GM12878 (cell line): ENCODE measurements at regions of chr12 and their contacts with region 1.

Region 1: DNA sequence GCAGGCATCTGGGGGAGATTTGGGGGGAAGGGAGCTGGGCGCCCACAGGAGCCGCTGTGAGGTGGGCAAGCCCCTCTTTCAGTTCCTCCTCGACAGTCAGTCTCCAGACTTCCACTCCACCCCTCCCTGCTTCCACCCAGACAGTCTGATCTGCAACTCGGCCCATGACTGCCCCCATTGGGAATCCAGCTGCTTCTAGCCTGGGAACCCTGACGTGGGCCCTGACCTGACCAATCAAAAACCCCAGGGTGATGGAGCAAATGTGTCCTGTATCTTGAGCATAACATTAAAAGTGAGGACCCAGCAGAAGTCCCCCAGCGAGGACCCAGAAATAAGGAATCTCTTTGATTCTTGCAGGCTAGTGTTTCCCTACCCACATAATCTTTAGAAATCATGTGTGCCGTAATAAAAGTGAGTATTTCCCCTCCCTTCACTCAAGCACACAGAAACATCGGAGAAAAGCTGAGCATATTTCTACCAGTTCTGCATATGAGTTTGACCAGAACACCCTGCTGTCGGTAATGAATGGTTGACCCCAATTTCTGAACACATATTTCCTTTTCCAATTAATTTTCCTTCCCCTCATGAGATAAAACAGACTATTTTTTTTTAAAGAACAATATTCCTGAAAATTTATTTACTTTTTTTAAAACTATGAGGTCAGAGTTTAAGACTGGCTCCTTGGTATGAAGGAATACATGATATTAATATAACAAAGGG is 6.4 kb downstream of the SSH1 start:
- DNase-seq: peak; percentile 79
- ATAC-seq: peak; percentile 82
- H3K4me3 ChIP-seq: no peak overlapping the region
- H3K27ac ChIP-seq: peak overlapping the region; percentile 74
- H3K4me1 ChIP-seq: peaks cover 36% of the 10 kb centered on the region
- H3K27me3 ChIP-seq: no peaks in the 10 kb centered on the region
- CTCF ChIP-seq: peak in 2 of 3 experiments; percentile 27 to 56; a peak in 4 of 6 replicates
- EP300 ChIP-seq: peak; percentile 66 to 84; a peak in 3 of 4 replicates
- POLR2A ChIP-seq: no peak
- RAD21 ChIP-seq: peak; percentile 67; the same call in 1 of the 2 replicates

Region 2: GRCh38 chr12:108570743-108571608 is 280.0 kb before region 1 on chr12:
- CTCF ChIA-PET with region 1: interaction called, 10 read pairs
- POLR2A ChIA-PET with region 1: interaction called, 4 read pairs
- RAD21 ChIA-PET with region 1: interaction called, 51 read pairs
- SMC1A ChIA-PET with region 1: interaction called, 48 read pairs
- in situ Hi-C with region 1: loop called (anchors 5 kb)
- intact Hi-C with region 1: no loop called
- DNase-seq: no peak
- ATAC-seq: no peak
- H3K4me3 ChIP-seq: no peak overlapping the region
- H3K27ac ChIP-seq: peak overlapping the region; percentile 100
- H3K4me1 ChIP-seq: peaks cover 89% of the 10 kb centered on the region
- H3K27me3 ChIP-seq: no peaks in the 10 kb centered on the region
- CTCF ChIP-seq: peak; percentile 42 to 53 (median 49); a peak in 4 of 6 replicates
- EP300 ChIP-seq: 0 out of 4 replicates have a peak, but pooled peaks of 1 of the 2 experiments have one; percentile 10
- POLR2A ChIP-seq: no peak
- RAD21 ChIP-seq: peak; percentile 66

Region 3: GRCh38 chr12:108731105-108731865 is 119.7 kb before region 1 on chr12 and contains the start of gene CORO1C:
- CTCF ChIA-PET with region 1: no interaction called
- POLR2A ChIA-PET with region 1: interaction called, 3 read pairs
- RAD21 ChIA-PET with region 1: interaction called, 5 read pairs
- SMC1A ChIA-PET with region 1: interaction called, 4 read pairs
- in situ Hi-C with region 1: no loop called
- intact Hi-C with region 1: loop called (anchors 5 kb)
- DNase-seq: peak; percentile 90
- ATAC-seq: peak; percentile 80
- H3K4me3 ChIP-seq: peak within 1 kb of the TSS; percentile 88
- H3K27ac ChIP-seq: peak within 1 kb of the TSS; percentile 79
- H3K4me1 ChIP-seq: peaks cover 13% of the 10 kb centered on the region
- H3K27me3 ChIP-seq: no peaks in the 10 kb centered on the region
- CTCF ChIP-seq: peak; percentile 80 to 88 (median 86)
- EP300 ChIP-seq: no peak; a peak in 1 of 4 replicates
- POLR2A ChIP-seq: peak; percentile 86
- RAD21 ChIP-seq: peak; percentile 58
- polyA plus RNA-seq, gene CORO1C: 52.7 to 52.9 TPM

Region 4: GRCh38 chr12:108826101-108826806 is 24.8 kb before region 1 on chr12:
- CTCF ChIA-PET with region 1: interaction called, 11 read pairs
- POLR2A ChIA-PET with region 1: interaction called, 32 read pairs
- RAD21 ChIA-PET with region 1: interaction called, 65 read pairs
- SMC1A ChIA-PET with region 1: interaction called, 52 read pairs
- in situ Hi-C with region 1: no loop called
- intact Hi-C with region 1: loop called (anchors 2 kb)
- DNase-seq: no peak
- ATAC-seq: peak; percentile 54
- H3K4me3 ChIP-seq: peak overlapping the region; percentile 21; the same call in 1 of the 2 replicates
- H3K27ac ChIP-seq: peak overlapping the region; percentile 60
- H3K4me1 ChIP-seq: peaks cover 81% of the 10 kb centered on the region
- H3K27me3 ChIP-seq: no peaks in the 10 kb centered on the region
- CTCF ChIP-seq: 0 out of 6 replicates have a peak, but pooled peaks of 1 of the 3 experiments have one; percentile 0
- EP300 ChIP-seq: no peak
- POLR2A ChIP-seq: no peak
- RAD21 ChIP-seq: no peak

Region 5: GRCh38 chr12:108838194-108839017 is 12.6 kb before region 1 on chr12:
- CTCF ChIA-PET with region 1: interaction called, 26 read pairs
- POLR2A ChIA-PET with region 1: interaction called, 40 read pairs
- RAD21 ChIA-PET with region 1: interaction called, 34 read pairs
- SMC1A ChIA-PET with region 1: interaction called, 44 read pairs
- in situ Hi-C with region 1: no loop called
- intact Hi-C with region 1: loop called (anchors 2 kb)
- DNase-seq: peak; percentile 91
- ATAC-seq: peak; percentile 98
- H3K4me3 ChIP-seq: no peak overlapping the region
- H3K27ac ChIP-seq: peak overlapping the region; percentile 90
- H3K4me1 ChIP-seq: peaks cover 21% of the 10 kb centered on the region
- H3K27me3 ChIP-seq: no peaks in the 10 kb centered on the region
- CTCF ChIP-seq: no peak
- EP300 ChIP-seq: peak; percentile 91 to 93
- POLR2A ChIP-seq: peak; percentile 59; the same call in 1 of the 2 replicates
- RAD21 ChIP-seq: no peak